ENCODE measurements at regions of chr16 and their contacts with region 1.

Region 1: GRCh38 chr16:96935-97381 is 18.9 kb downstream of the MPG start:
- DNase-seq: peak; percentile 87
- H3K4me3 ChIP-seq: no peak overlapping the region
- H3K27ac ChIP-seq: no peak overlapping the region
- H3K4me1 ChIP-seq: no peaks in the 10 kb centered on the region
- H3K27me3 ChIP-seq: no peaks in the 10 kb centered on the region
- CTCF ChIP-seq: peak; percentile 99 to 100
- POLR2A ChIP-seq: peak; percentile 43

Region 2: GRCh38 chr16:77807-78443 is 19.0 kb before region 1 on chr16 and contains the start of gene MPG:
- CTCF ChIA-PET with region 1: interaction called, 790 read pairs
- POLR2A ChIA-PET with region 1: no interaction called
- dilution Hi-C with region 1: no loop called
- intact Hi-C with region 1: no loop called
- DNase-seq: peak; percentile 69
- H3K4me3 ChIP-seq: peak within 1 kb of the TSS; percentile 13 to 73 (median 47)
- H3K27ac ChIP-seq: peak within 1 kb of the TSS; percentile 92
- H3K4me1 ChIP-seq: peaks cover 32% of the 10 kb centered on the region
- H3K27me3 ChIP-seq: no peaks in the 10 kb centered on the region
- CTCF ChIP-seq: no peak
- POLR2A ChIP-seq: peak; percentile 57
- total RNA-seq, gene MPG: 68.1 and 70.5 TPM in 2 replicates

Region 3: GRCh38 chr16:84718-85406 is 12.1 kb before region 1 on chr16:
- CTCF ChIA-PET with region 1: interaction called, 790 read pairs
- POLR2A ChIA-PET with region 1: interaction called, 5 read pairs
- dilution Hi-C with region 1: no loop called
- intact Hi-C with region 1: no loop called
- DNase-seq: peak; percentile 97
- H3K4me3 ChIP-seq: no peak overlapping the region
- H3K27ac ChIP-seq: peak overlapping the region; percentile 78
- H3K4me1 ChIP-seq: peaks cover 33% of the 10 kb centered on the region
- H3K27me3 ChIP-seq: no peaks in the 10 kb centered on the region
- CTCF ChIP-seq: no peak
- POLR2A ChIP-seq: peak; percentile 66

Measured in endothelial cell of umbilical vein (primary cell).